H1 (cell line): ENCODE measurements at regions of chr12 and their contacts with region 1.

Region 1: GRCh38 chr12:126663304-126664094 is 1598.3 kb downstream of the AACS start:
- DNase-seq: peak; percentile 7 to 52
- H3K4me3 ChIP-seq: no peak overlapping the region
- H3K27ac ChIP-seq: no peak overlapping the region
- H3K4me1 ChIP-seq: no peaks in the 10 kb centered on the region
- H3K27me3 ChIP-seq: no peaks in the 10 kb centered on the region; a peak in 1 of 7 replicates
- CTCF ChIP-seq: peak; percentile 72 to 78 (median 78)
- EP300 ChIP-seq: no peak
- POLR2A ChIP-seq: no peak
- RAD21 ChIP-seq: peak; percentile 85 to 87

Region 2: GRCh38 chr12:126362493-126362892 is 301.0 kb before region 1 on chr12:
- CTCF ChIA-PET with region 1: interaction called, 22 read pairs
- POLR2A ChIA-PET with region 1: no interaction called
- DNase-seq: no peak
- H3K4me3 ChIP-seq: no peak overlapping the region
- H3K27ac ChIP-seq: no peak overlapping the region
- H3K4me1 ChIP-seq: no peaks in the 10 kb centered on the region; a peak in 2 of 7 replicates
- H3K27me3 ChIP-seq: no peaks in the 10 kb centered on the region
- CTCF ChIP-seq: no peak
- EP300 ChIP-seq: no peak
- POLR2A ChIP-seq: no peak
- RAD21 ChIP-seq: no peak

Region 3: GRCh38 chr12:126651133-126651532 is 12.4 kb before region 1 on chr12:
- CTCF ChIA-PET with region 1: interaction called, 17 read pairs
- POLR2A ChIA-PET with region 1: no interaction called
- DNase-seq: no peak
- H3K4me3 ChIP-seq: no peak overlapping the region
- H3K27ac ChIP-seq: no peak overlapping the region
- H3K4me1 ChIP-seq: no peaks in the 10 kb centered on the region; a peak in 1 of 7 replicates
- H3K27me3 ChIP-seq: no peaks in the 10 kb centered on the region; a peak in 1 of 7 replicates
- CTCF ChIP-seq: no peak
- EP300 ChIP-seq: no peak
- POLR2A ChIP-seq: no peak
- RAD21 ChIP-seq: no peak